Calu3 (cell line): ENCODE measurements at regions of chr1 and their contacts with region 1.

Region 1: GRCh38 chr1:161792740-161793139 is 26.6 kb downstream of the ATF6 start:
- DNase-seq: peak; percentile 36
- H3K4me3 Mint-ChIP-seq: no peak overlapping the region
- H3K27ac Mint-ChIP-seq: no peak overlapping the region
- H3K4me1 Mint-ChIP-seq: peaks cover 7% of the 10 kb centered on the region
- H3K27me3 Mint-ChIP-seq: no peaks in the 10 kb centered on the region
- CTCF ChIP-seq: peak; percentile 63

Region 2: DNA sequence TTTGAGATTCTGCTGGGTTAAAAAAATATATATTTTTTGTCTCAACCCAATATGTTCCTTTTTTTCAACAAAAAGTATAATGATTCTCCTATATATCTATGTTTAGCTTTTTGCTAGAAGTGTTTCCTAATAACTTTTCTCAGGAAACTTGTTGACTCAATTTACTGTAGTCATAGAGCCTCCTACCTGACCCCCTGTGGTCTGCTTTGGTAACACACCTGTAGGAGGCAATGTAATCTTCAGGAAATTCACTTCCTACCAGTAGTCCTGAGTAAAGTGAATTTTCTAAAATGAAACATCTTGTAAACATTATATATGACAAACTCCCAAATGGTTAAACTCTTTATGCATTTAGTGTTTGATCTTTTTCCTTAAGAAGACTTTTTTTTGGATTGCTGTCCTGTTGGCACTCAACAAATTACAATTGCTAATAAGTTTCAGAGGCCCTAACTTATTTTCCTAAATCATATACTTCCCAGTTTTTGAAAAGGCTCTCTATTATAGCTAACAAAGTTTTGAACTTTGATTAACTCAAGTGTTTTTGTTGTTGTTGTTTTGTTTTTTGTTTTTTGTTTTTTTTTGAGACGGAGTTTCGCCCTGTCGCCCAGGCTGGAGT is 112.6 kb after region 1 on chr1:
- CTCF ChIA-PET with region 1: no interaction called
- intact Hi-C with region 1: loop called (anchors 1 kb)
- DNase-seq: peak; percentile 60
- H3K4me3 Mint-ChIP-seq: no peak overlapping the region
- H3K27ac Mint-ChIP-seq: peak overlapping the region; percentile 58
- H3K4me1 Mint-ChIP-seq: peaks cover 18% of the 10 kb centered on the region
- H3K27me3 Mint-ChIP-seq: no peaks in the 10 kb centered on the region
- CTCF ChIP-seq: peak; percentile 51

Region 3: DNA sequence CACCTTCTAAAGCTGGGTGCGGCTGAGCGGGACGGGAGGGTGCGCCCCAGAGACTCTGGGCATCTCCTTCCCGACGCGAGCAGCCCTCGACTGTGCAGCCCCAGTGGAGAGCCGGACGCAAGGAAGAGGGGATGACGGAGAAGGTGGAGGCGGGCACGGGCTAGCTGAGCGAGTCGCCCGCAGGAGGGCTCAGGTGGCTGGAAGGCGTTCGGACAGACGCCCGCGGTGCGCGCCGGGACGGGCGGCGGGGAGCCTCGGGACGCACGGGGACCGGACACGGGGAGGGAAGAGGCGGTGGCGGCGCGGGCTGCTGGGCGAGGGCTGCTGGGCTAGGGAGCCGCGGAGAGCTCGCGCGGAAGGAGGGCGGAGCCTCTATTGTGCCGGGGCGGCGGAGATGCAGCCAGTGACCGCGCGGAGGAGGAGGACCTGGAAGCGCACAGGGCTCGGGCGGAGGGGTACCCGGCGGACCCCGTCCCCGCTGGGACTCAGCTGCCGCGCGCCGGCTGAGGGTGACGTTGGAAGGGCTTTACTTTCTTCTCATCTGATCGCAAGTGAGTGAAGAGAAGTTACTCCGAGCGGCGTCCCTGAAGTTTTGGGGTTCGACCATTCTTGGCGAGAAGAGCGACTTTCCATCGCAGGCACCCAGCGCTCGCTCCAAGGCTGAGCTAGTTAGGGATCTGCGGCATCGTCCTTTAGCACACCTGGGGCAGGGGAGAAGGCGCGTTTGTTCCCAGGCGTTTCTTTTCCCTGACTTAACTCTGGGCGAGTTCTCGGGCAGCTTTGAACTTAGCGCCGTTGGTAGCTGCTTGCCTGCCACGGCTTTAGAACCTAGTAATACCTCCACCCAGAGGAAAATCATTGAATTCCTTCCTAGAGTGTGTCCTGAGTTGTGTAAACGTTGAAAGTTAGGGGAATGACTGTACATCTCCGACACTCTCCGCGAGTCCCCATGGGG is 231.1 kb after region 1 on chr1 and contains the start of gene OLFML2B:
- CTCF ChIA-PET with region 1: interaction called, 15 read pairs
- intact Hi-C with region 1: no loop called
- DNase-seq: peak; percentile 66
- H3K4me3 Mint-ChIP-seq: peak within 1 kb of the TSS; percentile 97
- H3K27ac Mint-ChIP-seq: peak within 1 kb of the TSS; percentile 50
- H3K4me1 Mint-ChIP-seq: peaks cover 16% of the 10 kb centered on the region
- H3K27me3 Mint-ChIP-seq: peaks cover 70% of the 10 kb centered on the region
- CTCF ChIP-seq: no peak
- total RNA-seq, gene OLFML2B: not detected in 2 replicates

Region 4: GRCh38 chr1:162035241-162035640 is 242.5 kb after region 1 on chr1:
- CTCF ChIA-PET with region 1: interaction called, 162 read pairs
- intact Hi-C with region 1: loop called (anchors 1 kb)
- DNase-seq: peak; percentile 73
- H3K4me3 Mint-ChIP-seq: no peak overlapping the region
- H3K27ac Mint-ChIP-seq: no peak overlapping the region
- H3K4me1 Mint-ChIP-seq: no peaks in the 10 kb centered on the region
- H3K27me3 Mint-ChIP-seq: peaks cover 33% of the 10 kb centered on the region
- CTCF ChIP-seq: no peak

Region 5: DNA sequence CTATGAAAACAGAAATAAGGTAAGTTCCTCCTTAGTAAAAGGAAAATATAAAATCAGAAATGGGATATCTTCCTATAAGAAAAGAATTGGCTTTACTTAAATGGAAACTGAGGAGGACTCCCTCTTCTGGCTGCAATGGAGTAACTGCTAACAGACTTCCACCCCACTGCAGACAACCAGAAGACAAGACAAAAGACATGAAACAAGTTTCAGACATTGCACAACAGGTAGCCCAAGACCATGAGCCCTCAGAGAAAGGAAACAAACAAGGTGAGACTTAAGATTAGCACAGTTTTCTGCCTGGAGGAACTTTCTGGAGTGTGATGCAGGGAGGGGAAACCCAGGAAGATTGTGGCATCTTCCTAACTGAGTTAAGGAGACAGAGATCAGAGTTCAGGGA is 247.9 kb after region 1 on chr1:
- CTCF ChIA-PET with region 1: interaction called, 162 read pairs
- intact Hi-C with region 1: loop called (anchors 1 kb)
- DNase-seq: no peak
- H3K4me3 Mint-ChIP-seq: no peak overlapping the region
- H3K27ac Mint-ChIP-seq: no peak overlapping the region
- H3K4me1 Mint-ChIP-seq: peaks cover 8% of the 10 kb centered on the region
- H3K27me3 Mint-ChIP-seq: no peaks in the 10 kb centered on the region
- CTCF ChIP-seq: peak; percentile 56

Region 6: DNA sequence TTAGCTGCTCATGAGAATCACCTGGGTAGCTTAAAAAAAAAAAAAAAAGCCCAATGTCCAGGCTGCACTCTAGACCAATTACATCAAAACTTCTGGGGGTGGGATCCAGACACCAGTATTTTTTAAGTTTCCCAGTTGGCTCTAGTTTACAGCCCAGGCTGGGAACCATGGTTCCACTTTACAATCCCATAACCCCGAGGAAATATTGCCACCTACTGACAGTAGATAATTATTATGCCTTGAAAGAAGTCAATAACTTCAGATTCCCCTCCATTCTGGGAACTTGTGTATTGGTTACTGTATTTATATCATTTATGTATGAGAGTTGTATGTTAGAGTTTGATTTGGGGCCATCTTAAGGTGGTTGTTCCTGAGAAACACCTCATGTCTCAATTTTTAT is 483.8 kb after region 1 on chr1:
- CTCF ChIA-PET with region 1: no interaction called
- intact Hi-C with region 1: loop called (anchors 2 kb)
- DNase-seq: peak; percentile 32
- H3K4me3 Mint-ChIP-seq: no peak overlapping the region
- H3K27ac Mint-ChIP-seq: no peak overlapping the region
- H3K4me1 Mint-ChIP-seq: peaks cover 8% of the 10 kb centered on the region
- H3K27me3 Mint-ChIP-seq: no peaks in the 10 kb centered on the region
- CTCF ChIP-seq: peak; percentile 56